CD8-positive, alpha-beta T cell (primary cell): ENCODE measurements at regions of chr1 and their contacts with region 1.

Region 1: GRCh38 chr1:201895913-201896807 is 7.5 kb downstream of the SHISA4 start:
- DNase-seq: peak; percentile 51 to 89 (median 80)
- ATAC-seq: peak; percentile 96
- H3K4me3 ChIP-seq: no peak overlapping the region
- H3K4me3 Mint-ChIP-seq: peak overlapping the region; percentile 56
- H3K27ac ChIP-seq: no peak overlapping the region
- H3K27ac Mint-ChIP-seq: peak overlapping the region; percentile 66
- H3K4me1 ChIP-seq: no peaks in the 10 kb centered on the region
- H3K4me1 Mint-ChIP-seq: peaks cover 5% of the 10 kb centered on the region
- H3K27me3 ChIP-seq: peaks cover 0 to 3% of the 10 kb centered on the region in 2 experiments
- H3K27me3 Mint-ChIP-seq: peaks cover 36% of the 10 kb centered on the region
- CTCF ChIP-seq: peak; percentile 79

Region 2: DNA sequence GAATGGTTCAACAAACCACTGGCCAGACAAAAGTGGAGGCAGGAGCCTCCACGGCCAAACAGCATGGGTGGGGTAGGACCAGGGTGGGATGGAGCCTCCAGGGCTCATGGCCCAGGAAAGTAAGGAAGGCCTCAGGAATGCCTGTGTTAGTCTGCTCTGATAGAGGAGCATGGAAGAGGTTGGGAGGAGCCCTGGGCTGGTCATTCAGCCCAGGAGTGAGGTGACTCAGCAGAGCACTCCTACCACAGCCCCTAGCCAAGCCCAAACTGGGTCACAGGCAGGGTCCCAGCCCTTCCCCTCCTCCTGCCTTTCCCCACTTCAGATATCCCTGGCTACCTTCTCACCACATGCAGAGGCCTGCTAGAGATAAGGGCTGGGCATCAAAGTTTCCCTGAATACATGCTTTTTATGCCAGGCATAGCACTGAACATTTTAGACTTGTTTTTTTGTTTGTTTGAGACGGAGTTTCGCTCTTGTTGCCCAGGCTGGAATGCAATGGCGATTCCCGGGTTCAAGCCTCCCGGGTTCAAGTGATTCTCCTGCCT is 10.6 kb before region 1 on chr1:
- CTCF ChIA-PET with region 1: interaction called, 22 read pairs
- POLR2A ChIA-PET with region 1: interaction called, 3 read pairs
- intact Hi-C with region 1: no loop called
- DNase-seq: no peak
- ATAC-seq: no peak
- H3K4me3 ChIP-seq: no peak overlapping the region
- H3K4me3 Mint-ChIP-seq: no peak overlapping the region
- H3K27ac ChIP-seq: no peak overlapping the region
- H3K27ac Mint-ChIP-seq: no peak overlapping the region
- H3K4me1 ChIP-seq: peaks cover 9% of the 10 kb centered on the region
- H3K4me1 Mint-ChIP-seq: peaks cover 5% of the 10 kb centered on the region
- H3K27me3 ChIP-seq: peaks cover 8 to 12% of the 10 kb centered on the region in 2 experiments
- H3K27me3 Mint-ChIP-seq: peaks cover 20% of the 10 kb centered on the region
- CTCF ChIP-seq: no peak

Region 3: DNA sequence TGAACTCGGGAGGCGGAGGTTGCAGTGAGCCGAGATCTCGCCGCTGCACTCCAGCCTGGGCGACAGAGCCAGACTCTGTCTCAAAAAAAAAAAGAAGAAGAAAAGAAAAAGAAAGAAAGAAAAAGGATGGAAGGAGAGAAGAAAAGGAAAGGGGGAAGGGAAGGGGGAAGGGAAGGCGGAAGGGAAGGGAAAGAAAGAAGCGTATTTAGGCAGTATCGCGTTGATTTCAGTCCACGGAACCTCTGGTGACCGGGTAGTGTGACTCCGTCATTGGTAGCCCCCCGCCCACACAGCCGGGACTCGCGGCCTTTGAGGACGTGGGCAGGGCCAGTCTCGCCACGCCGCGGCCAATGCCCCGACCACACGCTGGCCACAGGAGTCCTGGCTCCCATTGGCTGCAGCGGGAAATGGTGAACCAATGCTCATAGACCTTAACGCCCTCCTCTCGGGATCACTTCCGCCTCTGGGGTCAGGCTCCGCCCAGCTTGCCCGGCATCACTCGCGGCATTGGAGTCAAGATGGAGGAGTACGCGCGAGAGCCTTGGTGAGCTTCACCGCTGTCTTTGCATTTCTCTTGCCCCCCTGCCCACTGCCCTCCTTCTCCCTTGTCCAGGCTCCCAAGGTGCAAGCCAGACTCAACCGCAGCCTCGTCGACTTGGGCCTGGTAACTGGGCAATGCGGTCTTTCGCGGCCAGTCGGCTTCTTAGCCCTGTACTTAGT is 59.0 kb after region 1 on chr1 and contains the start of gene TIMM17A:
- CTCF ChIA-PET with region 1: interaction called, 6 read pairs
- POLR2A ChIA-PET with region 1: no interaction called
- intact Hi-C with region 1: loop called in 1 of 2 experiments (anchors 1 kb)
- DNase-seq: peak; percentile 82 to 96 (median 93)
- ATAC-seq: peak; percentile 99
- H3K4me3 ChIP-seq: peak within 1 kb of the TSS; percentile 91 to 98
- H3K4me3 Mint-ChIP-seq: peak within 1 kb of the TSS; percentile 98
- H3K27ac ChIP-seq: peak within 1 kb of the TSS; percentile 86 to 94
- H3K27ac Mint-ChIP-seq: peak within 1 kb of the TSS; percentile 96
- H3K4me1 ChIP-seq: peaks cover 13% of the 10 kb centered on the region
- H3K4me1 Mint-ChIP-seq: peaks cover 31% of the 10 kb centered on the region
- H3K27me3 ChIP-seq: no peaks in the 10 kb centered on the region
- H3K27me3 Mint-ChIP-seq: no peaks in the 10 kb centered on the region
- CTCF ChIP-seq: no peak
- total RNA-seq, gene TIMM17A: 58.0 to 66.6 TPM

Region 4: GRCh38 chr1:201999625-202000238 is 103.6 kb after region 1 on chr1:
- CTCF ChIA-PET with region 1: interaction called, 6 read pairs
- POLR2A ChIA-PET with region 1: no interaction called
- intact Hi-C with region 1: loop called in 1 of 2 experiments (anchors 1 kb)
- DNase-seq: peak in 4 of 9 experiments; percentile 10 to 58 (median 34)
- ATAC-seq: peak; percentile 83
- H3K4me3 ChIP-seq: no peak overlapping the region
- H3K4me3 Mint-ChIP-seq: no peak overlapping the region
- H3K27ac ChIP-seq: no peak overlapping the region
- H3K27ac Mint-ChIP-seq: no peak overlapping the region
- H3K4me1 ChIP-seq: no peaks in the 10 kb centered on the region
- H3K4me1 Mint-ChIP-seq: no peaks in the 10 kb centered on the region
- H3K27me3 ChIP-seq: no peaks in the 10 kb centered on the region
- H3K27me3 Mint-ChIP-seq: no peaks in the 10 kb centered on the region
- CTCF ChIP-seq: peak; percentile 71